BJ (cell line): ENCODE measurements at regions of chr2 and their contacts with region 1.

Region 1: GRCh38 chr2:43226558-43226954 is at the start of gene ZFP36L2:
- DNase-seq: no peak
- H3K4me3 ChIP-seq: peak within 1 kb of the TSS; percentile 95
- H3K27me3 ChIP-seq: no peaks in the 10 kb centered on the region
- CTCF ChIP-seq: no peak
- polyA plus RNA-seq, gene ZFP36L2: 4.0 and 6.9 TPM in 2 replicates

Region 2: GRCh38 chr2:42944779-42945415 is 281.7 kb before region 1 on chr2:
- CTCF ChIA-PET with region 1: interaction called, 66 read pairs
- POLR2A ChIA-PET with region 1: interaction called, 4 read pairs
- DNase-seq: no peak
- H3K4me3 ChIP-seq: no peak overlapping the region
- H3K27me3 ChIP-seq: no peaks in the 10 kb centered on the region
- CTCF ChIP-seq: no peak

Region 3: DNA sequence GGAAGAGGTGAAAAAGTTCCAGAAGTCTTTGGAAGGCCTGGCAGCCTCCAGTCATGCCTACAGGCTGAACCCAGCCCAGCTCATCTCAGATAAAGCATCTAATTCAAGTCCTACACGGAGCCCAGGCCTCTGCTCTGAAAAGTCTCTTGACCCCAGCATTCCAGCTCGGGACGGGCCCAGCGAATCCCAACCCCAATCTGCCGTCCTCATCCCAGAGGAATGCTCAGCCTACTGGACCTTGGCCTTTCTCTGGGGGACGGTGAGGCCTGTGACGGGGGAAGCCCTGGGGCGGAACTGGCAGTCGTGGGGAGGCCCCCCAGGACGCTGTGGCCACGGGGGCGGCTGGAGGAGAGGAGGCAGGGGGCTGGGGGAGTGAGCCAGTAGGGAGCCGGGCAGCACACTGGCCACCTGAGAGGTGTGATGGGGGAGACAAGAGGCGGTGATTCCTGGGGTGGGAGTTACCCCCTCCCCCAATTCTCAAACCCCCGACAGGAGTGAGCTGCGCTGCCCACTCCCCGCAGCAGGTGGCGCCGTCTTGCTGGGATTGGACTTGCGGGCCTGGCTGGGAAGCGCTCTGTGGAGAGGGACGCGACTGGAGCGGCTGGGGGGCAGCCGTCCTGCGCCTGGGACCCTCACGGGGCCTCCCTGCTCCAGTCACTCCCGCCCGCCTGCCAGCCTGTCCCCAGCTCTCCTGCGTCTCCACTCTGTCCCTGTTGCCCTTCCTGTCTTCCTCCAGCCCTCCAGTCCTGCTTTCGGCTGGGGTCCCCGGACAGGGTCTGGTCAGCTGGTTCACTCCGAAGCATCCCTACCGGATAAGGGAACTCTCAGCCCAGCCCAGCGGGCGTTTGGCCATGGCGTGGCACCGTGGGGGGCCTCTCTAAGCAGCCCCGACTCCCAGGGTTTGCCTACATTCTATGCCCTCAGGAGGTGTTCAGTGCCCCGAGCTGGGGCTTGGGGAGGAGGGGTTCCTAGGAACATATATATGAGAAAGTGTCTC is 251.5 kb before region 1 on chr2:
- CTCF ChIA-PET with region 1: interaction called, 62 read pairs
- POLR2A ChIA-PET with region 1: interaction called, 3 read pairs
- DNase-seq: no peak
- H3K4me3 ChIP-seq: peak overlapping the region; percentile 12; the same call in 1 of the 2 replicates
- H3K27me3 ChIP-seq: no peaks in the 10 kb centered on the region
- CTCF ChIP-seq: peak; percentile 92

Region 4: DNA sequence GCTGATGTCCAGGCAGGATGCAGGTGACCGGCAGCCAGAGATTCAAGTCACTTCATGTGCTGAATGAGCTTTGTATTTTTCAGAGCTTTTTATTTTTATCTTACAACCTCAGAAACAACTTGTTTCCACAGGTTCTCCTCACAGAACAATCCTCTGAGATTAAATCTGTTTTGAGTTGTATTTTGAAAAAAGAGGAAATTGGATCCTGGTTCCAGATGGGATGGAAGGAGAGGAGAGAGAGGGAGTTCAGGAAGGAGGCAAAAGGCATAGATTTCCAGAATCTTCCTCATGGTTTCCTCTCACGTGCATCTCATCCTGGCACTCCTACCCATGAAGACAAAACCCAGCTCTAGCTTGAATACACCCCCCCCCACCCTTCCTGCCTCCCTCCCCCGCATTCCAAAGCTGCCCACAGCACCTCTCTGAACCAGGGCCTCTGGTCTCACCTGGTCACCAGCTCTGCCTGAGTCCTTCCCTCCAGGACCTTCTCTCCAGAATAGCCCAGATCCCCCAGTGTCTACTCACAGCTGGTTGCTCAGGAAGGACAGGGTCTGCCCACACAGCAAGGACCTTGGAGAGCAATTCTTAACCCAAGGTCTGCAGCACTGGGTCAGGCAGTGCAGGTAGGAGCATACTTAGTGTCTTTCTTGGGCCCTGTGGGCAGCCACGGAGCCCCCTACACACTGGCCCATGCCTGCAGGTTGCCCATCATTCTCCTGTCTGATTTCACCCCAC is 104.8 kb before region 1 on chr2:
- CTCF ChIA-PET with region 1: interaction called, 10 read pairs
- POLR2A ChIA-PET with region 1: no interaction called
- DNase-seq: no peak
- H3K4me3 ChIP-seq: no peak overlapping the region
- H3K27me3 ChIP-seq: no peaks in the 10 kb centered on the region
- CTCF ChIP-seq: no peak

Region 5: GRCh38 chr2:43210467-43211303 is 15.9 kb before region 1 on chr2:
- CTCF ChIA-PET with region 1: no interaction called
- POLR2A ChIA-PET with region 1: no interaction called
- DNase-seq: no peak
- H3K4me3 ChIP-seq: no peak overlapping the region
- H3K27me3 ChIP-seq: no peaks in the 10 kb centered on the region
- CTCF ChIP-seq: no peak

Region 6: GRCh38 chr2:43484323-43484930 is 257.9 kb after region 1 on chr2:
- CTCF ChIA-PET with region 1: interaction called, 31 read pairs
- POLR2A ChIA-PET with region 1: no interaction called
- DNase-seq: peak; percentile 45
- H3K4me3 ChIP-seq: no peak overlapping the region
- H3K27me3 ChIP-seq: no peaks in the 10 kb centered on the region
- CTCF ChIP-seq: peak; percentile 46